Caco-2 (cell line): ENCODE measurements at regions of chr2 and their contacts with region 1.

Region 1: GRCh38 chr2:181393472-181393871 is 63.7 kb upstream of the ITGA4 start:
- DNase-seq: no peak
- H3K4me3 ChIP-seq: 0 out of 2 replicates have a peak overlapping the region, but pooled peaks have one; percentile 3
- H3K4me3 Mint-ChIP-seq: peak overlapping the region; percentile 37
- H3K27ac Mint-ChIP-seq: no peak overlapping the region
- H3K4me1 ChIP-seq: no peaks in the 10 kb centered on the region
- H3K4me1 Mint-ChIP-seq: no peaks in the 10 kb centered on the region
- H3K27me3 ChIP-seq: no peaks in the 10 kb centered on the region
- H3K27me3 Mint-ChIP-seq: peaks cover 2% of the 10 kb centered on the region
- CTCF ChIP-seq: no peak

Region 2: DNA sequence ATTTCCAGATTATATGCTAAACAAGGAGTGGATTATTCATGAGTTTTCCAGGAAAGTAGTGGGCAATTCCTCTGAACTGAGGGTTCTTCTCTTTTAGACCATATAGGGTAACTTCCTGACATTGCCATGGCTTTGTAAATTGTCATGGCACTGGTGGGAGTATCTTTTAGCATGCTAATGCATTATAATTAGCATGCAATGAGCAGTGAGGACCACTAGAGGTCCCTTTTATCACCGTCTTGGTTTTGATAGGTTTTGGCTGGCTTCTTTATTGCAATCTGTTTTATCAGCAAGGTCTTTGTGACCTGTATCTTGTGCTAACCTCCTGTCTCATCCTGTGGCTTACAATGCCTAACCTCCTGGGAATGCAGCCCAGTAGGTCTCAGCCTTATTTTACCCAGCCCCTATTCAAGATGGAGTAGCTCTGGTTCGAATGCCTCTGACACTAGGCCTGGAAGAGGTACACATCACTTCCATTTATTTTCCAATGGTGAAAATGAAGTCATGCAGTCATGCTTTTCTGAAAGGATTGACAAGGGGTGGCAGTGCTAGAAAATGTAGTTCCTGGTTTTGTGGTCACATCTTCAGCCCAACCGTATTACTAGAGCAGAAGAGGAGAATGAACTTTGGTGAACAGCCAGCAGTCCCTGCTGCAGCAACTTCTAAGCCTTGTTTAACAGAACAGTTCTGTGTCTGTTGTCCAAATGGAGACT is 37.1 kb after region 1 on chr2:
- CTCF ChIA-PET with region 1: no interaction called
- POLR2A ChIA-PET with region 1: no interaction called
- intact Hi-C with region 1: loop called (anchors 1 kb)
- DNase-seq: no peak
- H3K4me3 ChIP-seq: no peak overlapping the region
- H3K4me3 Mint-ChIP-seq: no peak overlapping the region
- H3K27ac Mint-ChIP-seq: no peak overlapping the region
- H3K4me1 ChIP-seq: no peaks in the 10 kb centered on the region
- H3K4me1 Mint-ChIP-seq: no peaks in the 10 kb centered on the region
- H3K27me3 ChIP-seq: no peaks in the 10 kb centered on the region
- H3K27me3 Mint-ChIP-seq: no peaks in the 10 kb centered on the region
- CTCF ChIP-seq: peak in 1 of 2 experiments; percentile 15